CD8-positive, alpha-beta memory T cell (primary cell): ENCODE measurements at regions of chr9 and their contacts with region 1.

Region 1: DNA sequence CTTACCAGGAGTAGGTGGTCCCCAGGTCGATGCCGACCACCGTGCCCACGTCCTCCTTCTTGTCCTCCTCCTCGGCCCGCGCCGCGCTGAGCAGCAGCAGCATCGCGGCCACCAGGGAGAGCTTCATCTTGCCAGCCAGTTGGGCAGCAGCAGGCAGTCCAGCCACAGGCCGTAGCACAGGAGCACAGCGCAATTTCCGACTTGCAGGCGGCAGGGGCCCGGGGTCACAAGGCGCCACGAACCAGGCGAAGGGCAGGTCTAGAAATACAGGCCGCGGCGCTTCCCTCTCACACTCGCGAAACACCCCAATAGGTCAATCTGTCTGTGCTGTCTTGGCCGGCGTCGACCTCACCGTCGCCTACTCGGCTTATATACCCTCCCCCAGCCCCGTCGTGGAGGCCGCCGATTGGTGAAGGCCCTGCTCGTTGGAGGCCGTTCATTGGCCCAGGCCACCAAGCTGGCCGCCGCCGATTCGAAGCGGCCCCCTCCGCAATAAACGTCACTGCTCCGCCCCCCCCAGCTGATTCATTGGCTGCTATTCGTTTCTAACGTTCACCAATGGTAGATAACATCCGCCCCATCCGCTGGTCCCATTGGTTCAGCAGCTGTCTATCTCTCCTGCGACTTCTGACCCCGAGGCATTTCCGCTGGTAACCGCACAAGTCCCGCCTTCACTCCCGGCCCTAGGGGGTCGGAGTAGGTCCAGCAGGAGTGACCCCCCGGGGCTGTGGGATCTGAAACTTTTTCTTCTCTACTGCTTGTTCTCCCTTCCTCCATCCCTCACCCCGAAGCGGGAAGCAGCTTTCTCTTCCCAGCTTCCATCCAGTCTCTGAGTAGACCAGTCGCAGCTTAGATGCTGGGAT is at the start of gene HSPA5:
- DNase-seq: peak; percentile 99 to 100 (median 99)
- H3K4me3 ChIP-seq: peak within 1 kb of the TSS; percentile 96
- H3K4me3 Mint-ChIP-seq: peak within 1 kb of the TSS; percentile 92 to 99 (median 95)
- H3K27ac ChIP-seq: peak within 1 kb of the TSS; percentile 99
- H3K27ac Mint-ChIP-seq: peak within 1 kb of the TSS; percentile 97 to 100 (median 99)
- H3K4me1 ChIP-seq: peaks cover 51% of the 10 kb centered on the region
- H3K4me1 Mint-ChIP-seq: peaks cover 46 to 53% (median 48%) of the 10 kb centered on the region in 3 donors
- H3K27me3 ChIP-seq: no peaks in the 10 kb centered on the region
- H3K27me3 Mint-ChIP-seq: peaks cover 0 to 13% of the 10 kb centered on the region in 2 donors
- total RNA-seq, gene HSPA5: 229 to 237 TPM

Region 2: GRCh38 chr9:125189361-125190289 is 51.6 kb before region 1 on chr9 and contains the start of gene PPP6C:
- CTCF ChIA-PET with region 1: interaction called, 4 read pairs
- POLR2A ChIA-PET with region 1: interaction called, 21 read pairs
- DNase-seq: peak; percentile 96 to 98 (median 97)
- H3K4me3 ChIP-seq: peak within 1 kb of the TSS; percentile 98
- H3K4me3 Mint-ChIP-seq: peak within 1 kb of the TSS; percentile 94 to 98 (median 97)
- H3K27ac ChIP-seq: peak within 1 kb of the TSS; percentile 97
- H3K27ac Mint-ChIP-seq: peak within 1 kb of the TSS; percentile 89 to 99 (median 96)
- H3K4me1 ChIP-seq: peaks cover 64% of the 10 kb centered on the region
- H3K4me1 Mint-ChIP-seq: peaks cover 41 to 84% (median 71%) of the 10 kb centered on the region in 3 donors
- H3K27me3 ChIP-seq: no peaks in the 10 kb centered on the region
- H3K27me3 Mint-ChIP-seq: no peaks in the 10 kb centered on the region
- total RNA-seq, gene PPP6C: 48.9 to 50.5 TPM

Region 3: GRCh38 chr9:125261501-125262293 is 20.5 kb after region 1 on chr9 and contains the start of gene GAPVD1:
- CTCF ChIA-PET with region 1: interaction called, 18 read pairs
- POLR2A ChIA-PET with region 1: interaction called, 47 read pairs
- DNase-seq: peak; percentile 83 to 92 (median 87)
- H3K4me3 ChIP-seq: peak within 1 kb of the TSS; percentile 71
- H3K4me3 Mint-ChIP-seq: peak within 1 kb of the TSS; percentile 95 to 99 (median 98)
- H3K27ac ChIP-seq: peak within 1 kb of the TSS; percentile 49
- H3K27ac Mint-ChIP-seq: peak within 1 kb of the TSS; percentile 72 to 99 (median 96)
- H3K4me1 ChIP-seq: peaks cover 32% of the 10 kb centered on the region
- H3K4me1 Mint-ChIP-seq: peaks cover 37 to 48% (median 41%) of the 10 kb centered on the region in 3 donors
- H3K27me3 ChIP-seq: no peaks in the 10 kb centered on the region
- H3K27me3 Mint-ChIP-seq: peaks cover 3 to 8% of the 10 kb centered on the region in 2 donors
- total RNA-seq, gene GAPVD1: 42.7 to 44.8 TPM

Region 4: DNA sequence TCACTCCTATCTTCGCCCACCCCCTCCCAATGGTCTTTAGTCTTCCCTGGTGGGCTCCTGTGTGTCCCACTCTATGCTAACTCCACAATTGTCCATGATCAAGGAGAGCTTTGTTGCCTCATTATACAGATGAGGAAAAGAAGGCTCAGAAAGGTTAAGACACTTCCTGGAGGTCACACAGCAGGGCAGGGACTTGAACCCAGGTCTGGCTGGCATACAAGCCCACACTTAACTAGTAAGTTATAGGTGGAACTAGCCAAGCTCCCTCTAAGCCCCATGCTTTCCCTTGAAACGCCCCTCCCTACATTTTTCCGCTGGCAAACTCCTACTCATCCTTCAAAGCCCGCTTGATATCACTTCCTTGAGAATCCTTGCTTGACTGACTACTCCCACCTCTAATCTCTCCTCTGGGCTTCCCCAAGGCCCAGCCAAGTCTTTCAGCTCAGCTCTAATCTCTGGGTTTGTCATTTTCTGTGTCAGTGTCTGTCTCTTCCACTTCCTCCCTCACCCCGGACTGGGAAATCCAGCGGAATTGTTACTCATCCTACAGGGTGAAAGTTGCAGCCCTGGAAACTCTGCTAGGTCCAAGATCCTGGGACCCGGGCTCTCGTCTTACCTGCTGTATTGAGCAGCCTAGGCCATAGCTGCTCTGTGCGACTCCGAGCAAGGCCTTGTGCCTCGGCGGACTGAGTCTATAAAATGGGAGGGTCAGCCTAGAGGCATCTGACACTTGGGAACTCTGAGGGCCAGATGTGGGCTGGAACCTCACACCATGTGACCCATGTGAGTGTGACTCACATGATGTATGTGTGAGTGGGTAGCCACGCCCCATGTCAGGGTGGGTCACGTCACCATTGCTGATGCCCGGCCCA is 164.9 kb after region 1 on chr9:
- CTCF ChIA-PET with region 1: no interaction called
- POLR2A ChIA-PET with region 1: no interaction called
- DNase-seq: no peak
- H3K4me3 ChIP-seq: no peak overlapping the region
- H3K4me3 Mint-ChIP-seq: peak overlapping the region in 3 of 7 donors; percentile 35 to 80 (median 69)
- H3K27ac ChIP-seq: no peak overlapping the region
- H3K27ac Mint-ChIP-seq: peak overlapping the region in 1 of 8 donors; percentile 79
- H3K4me1 ChIP-seq: no peaks in the 10 kb centered on the region
- H3K4me1 Mint-ChIP-seq: peaks cover 6 to 16% (median 7%) of the 10 kb centered on the region in 3 donors
- H3K27me3 ChIP-seq: no peaks in the 10 kb centered on the region
- H3K27me3 Mint-ChIP-seq: peaks cover 7 to 33% of the 10 kb centered on the region in 2 donors

Region 5: DNA sequence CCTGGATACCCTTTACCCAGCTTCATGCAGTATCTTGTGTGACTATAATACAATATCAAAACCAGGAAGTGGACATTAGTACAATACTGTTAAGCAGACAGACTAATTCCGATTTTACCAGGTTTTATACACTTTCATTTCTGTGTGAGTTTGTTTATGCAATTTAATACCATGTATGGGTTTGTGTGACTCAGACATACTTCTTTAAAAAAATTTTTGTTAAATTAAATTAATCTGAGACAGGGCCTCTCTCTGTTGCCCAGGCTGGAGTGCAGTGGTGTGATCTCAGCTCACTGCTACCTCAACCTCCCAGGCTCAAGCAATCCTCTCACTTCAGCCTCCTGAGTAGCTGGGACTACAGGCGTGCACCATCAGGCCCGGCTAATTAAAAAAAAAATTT is 177.2 kb after region 1 on chr9:
- CTCF ChIA-PET with region 1: no interaction called
- POLR2A ChIA-PET with region 1: no interaction called
- DNase-seq: no peak
- H3K4me3 ChIP-seq: no peak overlapping the region
- H3K4me3 Mint-ChIP-seq: no peak overlapping the region
- H3K27ac ChIP-seq: no peak overlapping the region
- H3K27ac Mint-ChIP-seq: peak overlapping the region in 1 of 8 donors; percentile 19
- H3K4me1 ChIP-seq: no peaks in the 10 kb centered on the region
- H3K4me1 Mint-ChIP-seq: no peaks in the 10 kb centered on the region
- H3K27me3 ChIP-seq: no peaks in the 10 kb centered on the region
- H3K27me3 Mint-ChIP-seq: peaks cover 0 to 3% of the 10 kb centered on the region in 2 donors